ENCODE measurements at regions of chr19 and their contacts with region 1.

Region 1: GRCh38 chr19:13794757-13795589 is at the start of gene ZSWIM4:
- H3K4me3 Mint-ChIP-seq: peak within 1 kb of the TSS; percentile 100
- H3K27ac Mint-ChIP-seq: peak within 1 kb of the TSS; percentile 96
- H3K4me1 Mint-ChIP-seq: peaks cover 47% of the 10 kb centered on the region
- H3K27me3 Mint-ChIP-seq: no peaks in the 10 kb centered on the region

Region 2: DNA sequence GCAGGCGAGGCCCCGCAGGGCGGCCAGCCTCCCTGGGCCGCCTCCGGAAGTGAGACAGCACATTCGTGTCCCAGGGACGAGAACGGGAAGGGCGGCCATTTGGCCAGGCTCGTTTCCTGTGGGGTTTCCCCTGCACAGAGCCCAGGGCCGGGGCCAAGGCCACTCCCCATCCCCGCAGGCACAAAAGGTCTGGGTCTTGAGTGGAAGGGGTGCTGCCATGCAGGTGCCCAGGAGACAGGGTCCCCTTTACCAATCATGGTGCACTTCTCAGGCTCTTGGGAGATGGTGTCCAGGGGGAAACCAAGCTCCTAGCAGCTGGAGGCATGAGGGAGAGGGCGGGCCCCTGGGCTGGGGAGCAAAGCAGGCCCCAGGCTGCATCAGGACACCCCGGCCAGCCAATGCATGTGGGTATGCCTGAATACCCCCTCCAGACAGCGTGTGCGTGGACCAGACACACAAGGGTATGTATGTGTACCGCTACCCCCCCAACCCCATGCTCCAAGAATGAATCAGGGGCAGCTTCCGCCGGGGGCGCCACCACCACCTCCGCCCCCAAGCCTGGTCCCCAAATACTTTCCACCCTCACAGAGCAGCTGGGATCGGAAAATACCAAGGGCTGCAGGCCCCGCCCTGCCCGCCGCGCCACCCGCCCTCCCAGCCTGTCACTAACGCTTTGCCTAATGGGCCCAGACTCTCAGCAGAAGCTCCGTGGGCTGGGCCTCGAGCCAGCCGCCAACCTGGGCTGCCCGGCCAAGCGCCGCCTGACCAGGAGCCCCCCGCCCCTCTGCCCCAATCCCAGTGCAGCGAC is 44.4 kb after region 1 on chr19:
- intact Hi-C with region 1: loop called (anchors 5 kb)
- H3K4me3 Mint-ChIP-seq: peak overlapping the region; percentile 97
- H3K27ac Mint-ChIP-seq: peak overlapping the region; percentile 100
- H3K4me1 Mint-ChIP-seq: peaks cover 57% of the 10 kb centered on the region
- H3K27me3 Mint-ChIP-seq: no peaks in the 10 kb centered on the region

Measured in dendritic cell treated with granulocyte-macrophage colony-stimulating factor and Interleukin-4, amounts not matched to agents 40 ng/mL and 50 ng/mL, for 4 days (primary cell).